WTC11 (cell line): ENCODE measurements at regions of chr4 and their contacts with region 1.

Region 1: DNA sequence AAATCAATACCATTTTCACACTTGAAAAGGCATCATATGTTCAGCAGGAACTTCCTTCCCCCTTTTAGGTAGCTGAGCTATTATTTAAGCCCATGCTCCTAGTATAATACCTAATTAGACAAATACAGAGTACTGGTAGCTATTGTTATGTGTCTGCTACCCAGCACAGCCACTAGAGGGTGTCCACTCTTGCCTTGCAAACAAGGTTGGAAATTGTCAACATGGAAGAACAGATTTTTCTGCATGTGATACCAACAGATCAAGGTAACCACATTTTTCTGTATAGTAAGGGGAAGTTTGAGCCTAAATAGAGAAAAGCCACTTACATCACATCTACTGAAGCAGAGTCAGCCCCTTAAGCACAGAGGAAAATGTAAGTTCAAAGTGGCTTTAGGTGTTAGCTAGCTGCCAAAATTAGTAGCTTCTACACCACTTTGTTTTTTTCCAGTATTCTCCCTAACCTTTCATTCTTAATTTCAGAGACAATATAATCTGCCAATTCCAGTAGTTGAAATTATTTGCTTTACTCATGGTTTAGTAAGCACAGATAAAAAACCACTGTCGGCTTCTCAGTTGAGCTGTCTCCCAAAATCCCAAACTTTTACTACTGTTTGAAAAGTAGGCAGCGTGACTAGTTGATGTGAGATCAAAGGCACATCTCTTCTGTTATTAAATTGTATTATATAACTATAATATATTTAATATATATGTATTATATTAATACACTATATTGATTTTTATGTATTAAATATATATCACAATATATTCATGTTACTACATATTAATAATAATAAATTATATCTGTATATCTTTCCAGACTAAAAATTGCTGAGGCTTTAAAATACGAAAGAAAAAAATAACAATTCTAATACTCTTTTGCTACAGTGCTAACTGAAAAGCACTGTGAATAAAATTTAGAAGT is 38.2 kb downstream of the EDNRA start:
- DNase-seq: peak; percentile 70
- ATAC-seq: peak; percentile 87
- H3K4me3 Mint-ChIP-seq: no peak overlapping the region
- H3K27ac Mint-ChIP-seq: no peak overlapping the region
- H3K4me1 Mint-ChIP-seq: no peaks in the 10 kb centered on the region
- H3K27me3 Mint-ChIP-seq: no peaks in the 10 kb centered on the region
- CTCF ChIP-seq: peak; percentile 79

Region 2: DNA sequence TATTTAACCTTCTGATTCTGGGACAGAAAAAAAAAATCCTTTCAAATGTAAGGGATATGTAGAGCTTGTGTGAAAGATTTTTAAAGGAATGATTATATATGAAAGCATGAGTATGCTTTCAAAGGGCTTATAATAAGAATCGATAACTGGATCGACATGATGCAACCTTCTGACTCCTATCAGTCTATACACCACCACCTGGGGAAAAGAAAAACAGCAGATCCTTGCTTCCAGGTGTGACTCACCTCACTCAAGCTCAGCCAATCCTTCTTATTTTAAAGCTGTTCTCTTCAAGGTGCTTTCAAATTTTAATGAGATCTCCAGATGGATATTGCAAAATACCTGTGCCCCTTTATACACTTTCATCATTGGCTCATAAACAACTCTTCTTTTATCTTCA is 140.3 kb before region 1 on chr4:
- CTCF ChIA-PET with region 1: interaction called, 10 read pairs
- POLR2A ChIA-PET with region 1: no interaction called
- DNase-seq: no peak
- ATAC-seq: peak; percentile 98
- H3K4me3 Mint-ChIP-seq: no peak overlapping the region
- H3K27ac Mint-ChIP-seq: peak overlapping the region; percentile 46; the same call in 1 of the 2 replicates
- H3K4me1 Mint-ChIP-seq: peaks cover 13% of the 10 kb centered on the region
- H3K27me3 Mint-ChIP-seq: no peaks in the 10 kb centered on the region; the same call in 1 of the 2 replicates
- CTCF ChIP-seq: no peak

Region 3: DNA sequence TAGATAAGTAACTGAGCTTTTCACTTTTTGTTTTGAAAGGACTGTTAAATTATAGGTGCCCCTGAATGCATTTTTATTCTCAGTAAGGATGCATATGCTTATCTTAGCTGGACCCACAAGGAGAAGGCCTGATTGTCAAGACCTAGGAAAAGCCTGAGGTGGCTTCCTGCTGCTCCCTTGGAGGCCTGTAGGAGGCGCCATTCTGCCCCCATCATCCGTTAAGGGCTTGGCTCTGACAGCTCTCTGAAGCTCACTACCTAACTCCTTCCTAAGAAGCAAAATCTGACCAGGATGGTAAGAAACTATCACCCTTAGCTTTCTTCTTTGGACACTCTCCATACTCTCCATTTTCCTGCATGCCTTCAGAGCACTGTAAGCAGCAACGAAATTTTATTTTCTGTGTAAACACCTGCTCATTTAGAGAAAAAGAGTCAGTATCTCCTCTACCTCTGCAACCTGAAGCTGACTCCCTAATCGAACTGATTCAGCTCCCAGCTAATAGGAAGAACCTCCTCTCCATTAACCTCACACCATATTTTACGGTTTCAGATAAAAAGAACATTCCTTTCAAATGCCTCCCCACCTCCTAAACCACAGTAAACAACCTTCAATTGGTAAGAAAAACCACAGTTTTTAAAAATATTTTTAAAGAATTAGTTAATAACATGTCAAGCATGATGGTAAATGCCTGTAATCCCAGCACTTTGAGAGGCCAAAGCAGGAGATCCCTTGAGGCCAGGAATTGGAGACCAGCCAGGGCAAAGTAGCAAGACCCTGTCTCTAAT is 111.7 kb before region 1 on chr4:
- CTCF ChIA-PET with region 1: interaction called, 18 read pairs
- POLR2A ChIA-PET with region 1: no interaction called
- DNase-seq: peak; percentile 59
- ATAC-seq: peak; percentile 91
- H3K4me3 Mint-ChIP-seq: no peak overlapping the region
- H3K27ac Mint-ChIP-seq: peak overlapping the region; percentile 27; the same call in 1 of the 2 replicates
- H3K4me1 Mint-ChIP-seq: no peaks in the 10 kb centered on the region
- H3K27me3 Mint-ChIP-seq: no peaks in the 10 kb centered on the region; the same call in 1 of the 2 replicates
- CTCF ChIP-seq: peak; percentile 90

Region 4: GRCh38 chr4:147480891-147481576 is 38.1 kb before region 1 on chr4 and contains the start of gene EDNRA:
- CTCF ChIA-PET with region 1: interaction called, 10 read pairs
- POLR2A ChIA-PET with region 1: no interaction called
- DNase-seq: peak; percentile 48
- ATAC-seq: peak; percentile 82
- H3K4me3 Mint-ChIP-seq: peak within 1 kb of the TSS; percentile 90
- H3K27ac Mint-ChIP-seq: no peak within 1 kb of the TSS
- H3K4me1 Mint-ChIP-seq: peaks cover 10% of the 10 kb centered on the region; the same call in 1 of the 2 replicates
- H3K27me3 Mint-ChIP-seq: peaks cover 37% of the 10 kb centered on the region
- CTCF ChIP-seq: no peak
- total RNA-seq, gene EDNRA: 2.1 to 2.5 TPM (median 2.3 TPM) in 3 replicates

Region 5: GRCh38 chr4:147590249-147590920 is 71.3 kb after region 1 on chr4:
- CTCF ChIA-PET with region 1: interaction called, 40 read pairs
- POLR2A ChIA-PET with region 1: no interaction called
- DNase-seq: peak; percentile 70
- ATAC-seq: peak; percentile 72
- H3K4me3 Mint-ChIP-seq: no peak overlapping the region
- H3K27ac Mint-ChIP-seq: no peak overlapping the region
- H3K4me1 Mint-ChIP-seq: peaks cover 23% of the 10 kb centered on the region
- H3K27me3 Mint-ChIP-seq: no peaks in the 10 kb centered on the region
- CTCF ChIP-seq: peak; percentile 51

Region 6: GRCh38 chr4:147617173-147617840 is 98.2 kb after region 1 on chr4 and contains the start of gene TMEM184C:
- CTCF ChIA-PET with region 1: interaction called, 13 read pairs
- POLR2A ChIA-PET with region 1: no interaction called
- DNase-seq: peak; percentile 98
- ATAC-seq: peak; percentile 98
- H3K4me3 Mint-ChIP-seq: peak within 1 kb of the TSS; percentile 97
- H3K27ac Mint-ChIP-seq: peak within 1 kb of the TSS; percentile 98
- H3K4me1 Mint-ChIP-seq: peaks cover 20% of the 10 kb centered on the region
- H3K27me3 Mint-ChIP-seq: no peaks in the 10 kb centered on the region; the same call in 1 of the 2 replicates
- CTCF ChIP-seq: no peak
- total RNA-seq, gene TMEM184C: 42.3 to 43.7 TPM (median 43.4 TPM) in 3 replicates